Ascending aorta (tissue), 2 donors: ENCODE measurements at regions of chr3 and their contacts with region 1.

Region 1: GRCh38 chr3:113495035-113495434 is 19.9 kb downstream of the SPICE1 start:
- DNase-seq: no peak
- H3K4me3 ChIP-seq: no peak overlapping the region
- H3K27ac ChIP-seq: no peak overlapping the region
- H3K4me1 ChIP-seq: no peaks in the 10 kb centered on the region
- H3K27me3 ChIP-seq: no peaks in the 10 kb centered on the region
- CTCF ChIP-seq: peak in 1 of 3 experiments; percentile 33

Region 2: GRCh38 chr3:113312416-113312815 is 182.6 kb before region 1 on chr3:
- intact Hi-C with region 1: no loop called
- DNase-seq: no peak
- H3K4me3 ChIP-seq: no peak overlapping the region
- H3K27ac ChIP-seq: no peak overlapping the region
- H3K4me1 ChIP-seq: no peaks in the 10 kb centered on the region
- H3K27me3 ChIP-seq: no peaks in the 10 kb centered on the region
- CTCF ChIP-seq: no peak

Region 3: GRCh38 chr3:113626503-113627371 is 131.7 kb after region 1 on chr3:
- intact Hi-C with region 1: loop called (anchors 1 kb)
- DNase-seq: peak in 1 of 2 donors; percentile 81
- H3K4me3 ChIP-seq: peak overlapping the region in 1 of 2 donors; percentile 13
- H3K27ac ChIP-seq: no peak overlapping the region
- H3K4me1 ChIP-seq: no peaks in the 10 kb centered on the region
- H3K27me3 ChIP-seq: no peaks in the 10 kb centered on the region
- CTCF ChIP-seq: peak; percentile 63 to 76 (median 73)